ENCODE measurements at regions of chr3 and their contacts with region 1.

Region 1: DNA sequence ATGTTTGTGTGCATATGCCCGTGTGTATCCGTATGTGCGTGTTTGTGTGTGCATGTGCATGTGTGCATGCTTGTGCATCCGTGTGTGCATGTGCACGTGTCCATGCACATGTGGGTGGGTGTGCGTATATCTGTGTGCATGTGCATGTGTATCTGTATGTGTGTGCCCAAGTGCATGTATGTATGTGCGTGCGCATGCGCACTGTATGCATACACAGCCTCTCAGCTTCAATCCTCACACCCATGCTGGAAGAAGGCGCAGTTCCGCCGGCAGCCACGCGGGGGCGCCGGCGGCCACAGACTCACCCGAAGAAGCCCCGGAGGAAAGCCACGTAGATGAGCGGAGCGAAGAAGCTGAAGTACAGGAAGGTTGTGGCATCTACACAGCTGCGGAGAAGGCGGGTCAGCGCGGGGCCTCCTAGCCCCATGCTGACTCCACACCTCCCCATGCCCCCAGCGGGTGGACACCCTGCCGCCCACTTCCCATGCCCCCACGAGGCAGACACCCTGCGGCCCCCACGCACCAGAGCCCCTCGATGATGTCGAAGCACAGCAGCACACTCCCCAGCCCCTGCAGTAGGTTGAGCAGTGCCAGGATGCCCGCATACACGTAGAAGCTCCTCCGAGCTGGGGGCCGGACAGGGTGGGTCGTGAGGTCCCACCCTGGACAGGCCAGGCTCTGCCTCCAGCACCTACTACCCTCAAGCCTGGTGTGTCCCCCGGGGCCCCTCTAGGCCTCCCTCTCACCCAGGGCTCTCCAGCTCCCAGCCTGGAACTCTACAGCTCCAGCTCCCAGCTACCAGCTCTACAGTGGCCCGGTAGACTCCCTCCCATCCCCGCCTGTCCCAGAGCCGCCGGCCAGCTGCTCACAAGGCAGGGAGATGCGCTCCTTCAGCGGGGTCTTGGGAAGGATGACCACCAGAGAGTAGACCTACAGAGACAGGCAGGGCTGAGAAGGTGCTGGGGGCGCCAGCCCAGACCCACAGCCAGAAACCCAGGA is 15.4 kb downstream of the TPRA1 start:
- DNase-seq: peak; percentile 86
- H3K4me3 Mint-ChIP-seq: no peak overlapping the region
- H3K27ac Mint-ChIP-seq: no peak overlapping the region
- H3K4me1 Mint-ChIP-seq: peaks cover 6% of the 10 kb centered on the region
- H3K27me3 Mint-ChIP-seq: no peaks in the 10 kb centered on the region

Region 2: GRCh38 chr3:127002195-127003174 is 572.7 kb before region 1 on chr3:
- CTCF ChIA-PET with region 1: no interaction called
- intact Hi-C with region 1: no loop called
- DNase-seq: no peak
- H3K4me3 Mint-ChIP-seq: no peak overlapping the region
- H3K27ac Mint-ChIP-seq: no peak overlapping the region
- H3K4me1 Mint-ChIP-seq: no peaks in the 10 kb centered on the region
- H3K27me3 Mint-ChIP-seq: no peaks in the 10 kb centered on the region

Region 3: GRCh38 chr3:127585493-127586413 is 10.6 kb after region 1 on chr3:
- CTCF ChIA-PET with region 1: interaction called, 21 read pairs
- intact Hi-C with region 1: loop called (anchors 1 kb)
- DNase-seq: no peak
- H3K4me3 Mint-ChIP-seq: no peak overlapping the region
- H3K27ac Mint-ChIP-seq: no peak overlapping the region
- H3K4me1 Mint-ChIP-seq: peaks cover 33% of the 10 kb centered on the region
- H3K27me3 Mint-ChIP-seq: no peaks in the 10 kb centered on the region

Region 4: GRCh38 chr3:127598841-127599570 is 23.8 kb after region 1 on chr3:
- CTCF ChIA-PET with region 1: interaction called, 18 read pairs
- intact Hi-C with region 1: loop called (anchors 1 kb)
- DNase-seq: no peak
- H3K4me3 Mint-ChIP-seq: peak overlapping the region; percentile 84
- H3K27ac Mint-ChIP-seq: peak overlapping the region; percentile 89
- H3K4me1 Mint-ChIP-seq: peaks cover 40% of the 10 kb centered on the region
- H3K27me3 Mint-ChIP-seq: no peaks in the 10 kb centered on the region

Region 5: DNA sequence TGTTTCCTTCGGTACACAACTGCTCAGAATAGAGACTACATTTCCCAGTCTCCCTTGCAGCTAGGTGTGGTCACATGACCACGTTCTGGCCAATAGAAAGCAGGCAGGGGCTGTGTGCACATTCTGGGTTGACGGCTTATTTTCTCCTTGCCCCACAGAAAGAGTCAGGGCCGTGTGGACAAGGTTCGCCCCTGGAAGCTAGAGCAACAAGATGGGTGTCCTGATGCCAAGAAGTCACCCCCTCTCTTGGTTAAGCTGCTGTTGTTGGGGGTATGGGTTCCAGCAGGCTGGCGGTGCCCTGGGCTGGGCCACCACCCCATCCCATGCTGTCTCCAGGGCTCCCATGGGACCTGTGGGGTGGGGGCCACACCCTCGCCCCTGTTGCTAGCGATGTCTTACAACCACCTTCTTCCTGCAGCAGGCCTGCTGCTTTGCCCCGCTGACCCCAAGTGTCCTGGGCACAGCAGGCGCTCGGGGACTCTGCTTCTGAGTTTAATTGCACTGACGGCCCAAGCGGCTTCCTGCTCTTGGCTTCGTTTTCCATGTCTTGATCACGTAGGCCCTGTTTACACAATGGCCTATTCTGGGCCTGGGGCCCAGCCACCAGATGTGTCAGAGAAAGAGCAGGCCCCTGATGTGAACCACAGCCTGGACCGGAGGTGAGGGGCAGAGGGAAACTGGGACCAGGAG is 122.5 kb after region 1 on chr3:
- CTCF ChIA-PET with region 1: interaction called, 13 read pairs
- intact Hi-C with region 1: loop called (anchors 1 kb)
- DNase-seq: peak; percentile 60
- H3K4me3 Mint-ChIP-seq: no peak overlapping the region
- H3K27ac Mint-ChIP-seq: no peak overlapping the region
- H3K4me1 Mint-ChIP-seq: no peaks in the 10 kb centered on the region
- H3K27me3 Mint-ChIP-seq: no peaks in the 10 kb centered on the region

Region 6: GRCh38 chr3:127970966-127971592 is 395.9 kb after region 1 on chr3:
- CTCF ChIA-PET with region 1: interaction called, 3 read pairs
- intact Hi-C with region 1: loop called (anchors 1 kb)
- DNase-seq: peak; percentile 31
- H3K4me3 Mint-ChIP-seq: no peak overlapping the region
- H3K27ac Mint-ChIP-seq: no peak overlapping the region
- H3K4me1 Mint-ChIP-seq: no peaks in the 10 kb centered on the region
- H3K27me3 Mint-ChIP-seq: peaks cover 14% of the 10 kb centered on the region